Activated naive CD4-positive, alpha-beta T cell treated with anti-CD3 and anti-CD28 coated beads for 36 hours (primary cell): ENCODE measurements at regions of chr9 and their contacts with region 1.

Region 1: DNA sequence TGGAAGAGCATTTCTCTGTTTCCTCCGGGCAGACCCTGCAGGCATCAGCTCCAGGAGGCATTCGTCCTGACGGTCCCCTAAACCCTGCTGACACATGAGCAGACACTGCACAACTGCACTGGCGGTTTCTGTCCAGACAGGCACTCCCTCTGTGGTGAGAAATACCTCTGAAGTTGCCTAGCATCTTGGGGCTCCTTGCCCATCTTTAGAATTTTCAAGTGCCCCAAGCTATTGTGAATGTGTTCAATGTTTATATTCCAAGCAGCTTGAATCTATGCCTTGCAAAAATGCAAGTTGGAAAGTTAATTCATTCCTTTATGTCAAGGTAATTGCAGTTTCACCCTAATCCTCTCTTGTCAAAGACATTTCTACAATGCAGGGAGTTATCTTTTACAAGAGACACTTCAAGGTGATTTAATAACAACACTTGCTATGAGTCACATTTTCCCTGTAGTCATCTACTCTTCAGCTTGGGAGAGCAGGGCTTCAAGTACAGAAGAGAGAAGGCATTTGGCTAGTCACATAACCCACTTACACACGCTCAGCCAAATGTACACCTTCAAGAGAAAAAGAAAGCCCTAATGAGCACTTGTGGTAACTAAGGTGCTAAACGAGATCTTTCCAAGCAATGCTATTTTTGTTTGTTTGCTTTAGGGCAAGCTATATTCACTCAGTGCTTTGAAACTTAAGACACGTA is 302.5 kb downstream of the MLLT3 start:
- DNase-seq: peak; percentile 48
- H3K4me3 Mint-ChIP-seq: no peak overlapping the region
- H3K27ac Mint-ChIP-seq: peak overlapping the region; percentile 86
- H3K4me1 Mint-ChIP-seq: peaks cover 98% of the 10 kb centered on the region
- H3K27me3 Mint-ChIP-seq: no peaks in the 10 kb centered on the region

Region 2: GRCh38 chr9:19925817-19926503 is 393.8 kb before region 1 on chr9:
- CTCF ChIA-PET with region 1: interaction called, 5 read pairs
- intact Hi-C with region 1: loop called (anchors 1 kb)
- DNase-seq: peak; percentile 90
- H3K4me3 Mint-ChIP-seq: peak overlapping the region; percentile 57
- H3K27ac Mint-ChIP-seq: no peak overlapping the region
- H3K4me1 Mint-ChIP-seq: peaks cover 18% of the 10 kb centered on the region
- H3K27me3 Mint-ChIP-seq: peaks cover 2% of the 10 kb centered on the region

Region 3: GRCh38 chr9:20242510-20243189 is 77.1 kb before region 1 on chr9:
- CTCF ChIA-PET with region 1: no interaction called
- intact Hi-C with region 1: loop called (anchors 2 kb)
- DNase-seq: peak; percentile 52
- H3K4me3 Mint-ChIP-seq: no peak overlapping the region
- H3K27ac Mint-ChIP-seq: no peak overlapping the region
- H3K4me1 Mint-ChIP-seq: peaks cover 60% of the 10 kb centered on the region
- H3K27me3 Mint-ChIP-seq: no peaks in the 10 kb centered on the region

Region 4: DNA sequence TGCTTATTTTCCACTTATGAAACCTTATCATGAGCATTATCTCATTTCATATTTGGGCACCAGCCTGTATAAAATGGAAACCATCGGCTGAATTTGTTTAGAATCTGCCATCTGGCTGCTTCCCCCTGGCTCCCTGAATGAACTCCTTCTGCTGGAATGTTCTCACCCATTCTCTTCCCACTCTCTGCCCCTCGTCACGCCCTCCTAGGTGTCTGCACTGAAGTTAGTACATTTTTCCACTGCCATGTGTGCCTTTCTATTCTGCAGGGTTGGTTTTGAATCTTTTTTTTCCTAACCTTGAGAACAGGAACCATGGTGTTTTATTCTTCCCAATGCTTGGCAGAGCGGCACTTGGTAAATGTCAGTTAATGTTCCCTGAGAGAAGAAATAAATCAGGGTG is 57.2 kb before region 1 on chr9:
- CTCF ChIA-PET with region 1: no interaction called
- intact Hi-C with region 1: no loop called
- DNase-seq: no peak
- H3K4me3 Mint-ChIP-seq: no peak overlapping the region
- H3K27ac Mint-ChIP-seq: no peak overlapping the region
- H3K4me1 Mint-ChIP-seq: peaks cover 2% of the 10 kb centered on the region
- H3K27me3 Mint-ChIP-seq: no peaks in the 10 kb centered on the region

Region 5: DNA sequence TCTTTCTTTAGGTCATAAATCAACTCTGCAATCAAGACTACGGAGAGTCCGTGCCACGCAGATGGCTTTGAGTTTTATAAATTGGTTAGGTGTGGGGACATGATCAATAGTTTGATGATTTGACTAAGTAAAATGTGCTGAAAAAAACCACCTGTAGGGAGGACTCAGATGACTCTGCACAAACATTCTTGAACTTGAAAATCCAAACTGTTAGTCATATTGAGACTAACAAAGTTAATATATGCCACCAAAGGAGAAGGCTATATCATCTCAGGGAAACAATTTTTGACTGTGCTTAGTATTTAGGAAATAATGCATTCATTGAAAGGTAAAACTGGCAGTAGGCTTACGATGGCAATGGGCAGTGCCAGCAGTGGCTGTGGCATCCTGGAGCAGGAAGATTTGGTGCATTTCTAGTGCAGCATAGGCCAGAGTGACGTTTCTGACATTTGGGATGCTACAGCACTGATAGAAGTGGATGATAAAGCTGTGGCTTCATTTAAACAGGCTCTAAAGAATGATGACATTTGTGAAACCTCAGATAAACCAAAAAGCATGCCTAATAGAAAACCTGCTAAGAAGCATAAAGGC is 11.4 kb after region 1 on chr9:
- CTCF ChIA-PET with region 1: interaction called, 10 read pairs
- intact Hi-C with region 1: loop called (anchors 1 kb)
- DNase-seq: peak; percentile 18
- H3K4me3 Mint-ChIP-seq: no peak overlapping the region
- H3K27ac Mint-ChIP-seq: peak overlapping the region; percentile 15
- H3K4me1 Mint-ChIP-seq: peaks cover 22% of the 10 kb centered on the region
- H3K27me3 Mint-ChIP-seq: no peaks in the 10 kb centered on the region

Region 6: GRCh38 chr9:20558566-20559016 is 238.8 kb after region 1 on chr9:
- CTCF ChIA-PET with region 1: no interaction called
- intact Hi-C with region 1: loop called (anchors 1 kb)
- DNase-seq: peak; percentile 70
- H3K4me3 Mint-ChIP-seq: peak overlapping the region; percentile 36
- H3K27ac Mint-ChIP-seq: peak overlapping the region; percentile 59
- H3K4me1 Mint-ChIP-seq: peaks cover 86% of the 10 kb centered on the region
- H3K27me3 Mint-ChIP-seq: no peaks in the 10 kb centered on the region

Region 7: DNA sequence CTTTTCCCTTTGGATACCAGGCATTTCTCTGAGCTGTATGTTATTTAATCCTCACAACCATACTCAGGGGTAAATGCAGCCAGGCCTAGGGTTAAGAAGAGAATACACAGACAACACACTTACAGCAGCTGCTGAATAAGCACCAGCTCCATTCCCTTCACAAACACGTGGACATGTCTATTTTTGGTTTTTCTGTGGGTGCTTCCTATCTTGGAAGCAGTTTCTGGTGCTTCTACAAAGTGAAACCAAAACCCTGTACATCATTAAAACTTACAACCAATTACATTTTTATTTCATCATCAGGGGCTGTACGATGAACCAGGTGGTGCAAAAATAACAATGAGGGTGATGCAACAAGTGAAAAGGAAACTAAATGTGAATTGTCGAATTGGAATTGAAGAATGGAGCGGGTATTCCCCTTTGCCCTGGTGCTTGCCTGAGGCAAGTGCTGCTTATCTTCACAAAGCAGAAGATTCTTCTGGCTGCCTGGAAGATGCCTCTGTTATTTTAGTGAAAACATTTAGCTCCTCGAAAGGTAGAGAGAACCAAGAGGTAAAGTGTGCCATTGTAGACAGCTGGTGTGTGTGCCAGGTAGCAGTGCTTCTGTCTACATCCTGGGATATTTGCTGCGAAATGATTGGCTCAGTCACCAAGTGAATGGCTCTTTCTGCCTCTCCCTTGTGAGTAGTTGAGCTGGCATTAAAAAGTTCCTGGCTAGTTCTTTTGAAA is 776.5 kb after region 1 on chr9:
- CTCF ChIA-PET with region 1: no interaction called
- intact Hi-C with region 1: loop called (anchors 2 kb)
- DNase-seq: peak; percentile 67
- H3K4me3 Mint-ChIP-seq: peak overlapping the region; percentile 76
- H3K27ac Mint-ChIP-seq: peak overlapping the region; percentile 94
- H3K4me1 Mint-ChIP-seq: peaks cover 39% of the 10 kb centered on the region
- H3K27me3 Mint-ChIP-seq: no peaks in the 10 kb centered on the region

Region 8: GRCh38 chr9:21974548-21975409 is 1655.0 kb after region 1 on chr9:
- CTCF ChIA-PET with region 1: no interaction called
- intact Hi-C with region 1: no loop called
- DNase-seq: peak; percentile 75
- H3K4me3 Mint-ChIP-seq: peak overlapping the region; percentile 56
- H3K27ac Mint-ChIP-seq: no peak overlapping the region
- H3K4me1 Mint-ChIP-seq: peaks cover 14% of the 10 kb centered on the region
- H3K27me3 Mint-ChIP-seq: peaks cover 81% of the 10 kb centered on the region